ENCODE measurements at regions of chr14 and their contacts with region 1.

Region 1: GRCh38 chr14:96852823-96853422 is 55.7 kb downstream of the VRK1 start:
- DNase-seq: peak; percentile 4
- ATAC-seq: peak; percentile 84
- H3K4me3 ChIP-seq: no peak overlapping the region
- H3K27ac ChIP-seq: no peak overlapping the region
- H3K4me1 ChIP-seq: no peaks in the 10 kb centered on the region
- H3K27me3 ChIP-seq: no peaks in the 10 kb centered on the region
- CTCF ChIP-seq: peak; percentile 57 to 68 (median 61)
- EP300 ChIP-seq: no peak
- POLR2A ChIP-seq: no peak
- RAD21 ChIP-seq: peak; percentile 67

Region 2: GRCh38 chr14:96584199-96584906 is 268.6 kb before region 1 on chr14:
- CTCF ChIA-PET with region 1: interaction called, 11 read pairs
- POLR2A ChIA-PET with region 1: no interaction called
- RAD21 ChIA-PET with region 1: interaction called, 3 read pairs
- SMC1A ChIA-PET with region 1: interaction called, 4 read pairs
- in situ Hi-C with region 1: no loop called
- intact Hi-C with region 1: loop called (anchors 2 kb)
- DNase-seq: no peak
- ATAC-seq: peak; percentile 92
- H3K4me3 ChIP-seq: no peak overlapping the region
- H3K27ac ChIP-seq: no peak overlapping the region
- H3K4me1 ChIP-seq: no peaks in the 10 kb centered on the region
- H3K27me3 ChIP-seq: peaks cover 0 to 2% of the 10 kb centered on the region in 2 experiments; a peak in 1 of 4 replicates
- CTCF ChIP-seq: peak; percentile 65 to 90 (median 74)
- EP300 ChIP-seq: no peak
- POLR2A ChIP-seq: no peak
- RAD21 ChIP-seq: peak; percentile 67

Region 3: GRCh38 chr14:96676166-96676565 is 176.8 kb before region 1 on chr14:
- CTCF ChIA-PET with region 1: no interaction called
- POLR2A ChIA-PET with region 1: no interaction called
- RAD21 ChIA-PET with region 1: no interaction called
- SMC1A ChIA-PET with region 1: no interaction called
- in situ Hi-C with region 1: no loop called
- intact Hi-C with region 1: no loop called
- DNase-seq: no peak
- ATAC-seq: no peak
- H3K4me3 ChIP-seq: no peak overlapping the region
- H3K27ac ChIP-seq: no peak overlapping the region
- H3K4me1 ChIP-seq: no peaks in the 10 kb centered on the region
- H3K27me3 ChIP-seq: no peaks in the 10 kb centered on the region
- CTCF ChIP-seq: no peak
- EP300 ChIP-seq: no peak
- POLR2A ChIP-seq: no peak
- RAD21 ChIP-seq: no peak

Region 4: DNA sequence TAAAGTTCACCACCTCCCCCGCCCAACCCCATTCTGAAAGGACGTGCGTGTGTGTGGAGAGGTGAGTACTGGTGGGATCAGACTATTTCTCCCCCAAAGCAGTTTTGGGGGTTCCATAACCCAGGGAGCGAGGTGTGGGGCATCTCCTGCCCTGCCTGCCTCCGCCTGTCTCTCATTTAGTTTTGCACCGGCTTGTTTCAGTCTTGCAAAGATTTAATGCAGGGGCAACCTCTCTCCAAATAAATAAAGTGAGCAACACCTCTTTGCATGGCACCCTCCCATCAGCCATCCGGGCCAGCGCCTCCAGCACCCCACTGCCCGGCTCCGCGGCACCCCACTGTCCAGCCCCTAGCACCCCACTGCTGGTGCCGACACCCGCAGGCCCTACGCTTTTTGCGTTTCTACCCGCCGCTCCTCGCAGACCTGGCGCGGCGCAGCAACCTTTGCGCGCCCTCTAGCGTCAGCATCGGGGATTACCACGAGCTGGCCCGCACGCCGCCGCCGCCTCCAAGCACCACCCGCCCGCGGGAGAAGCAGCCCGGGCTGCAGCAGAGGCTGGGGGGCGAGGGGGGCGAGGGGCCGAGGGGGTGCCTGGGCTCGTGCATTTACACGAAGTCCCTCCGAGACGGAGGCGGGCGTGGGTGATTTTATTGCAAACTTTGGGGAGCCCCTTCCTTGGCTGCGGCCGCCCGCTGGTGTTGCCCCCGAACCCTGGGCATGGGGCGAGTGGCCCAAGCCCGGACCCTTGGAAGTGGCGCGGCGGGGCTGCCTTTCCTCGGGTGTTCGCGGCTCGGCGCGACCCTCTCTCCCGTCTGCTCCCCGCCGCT is 111.6 kb before region 1 on chr14:
- CTCF ChIA-PET with region 1: interaction called, 15 read pairs
- POLR2A ChIA-PET with region 1: no interaction called
- RAD21 ChIA-PET with region 1: interaction called, 18 read pairs
- SMC1A ChIA-PET with region 1: interaction called, 13 read pairs
- in situ Hi-C with region 1: no loop called
- intact Hi-C with region 1: no loop called
- DNase-seq: no peak
- ATAC-seq: peak; percentile 97
- H3K4me3 ChIP-seq: peak overlapping the region; percentile 23; the same call in 1 of the 2 replicates
- H3K27ac ChIP-seq: no peak overlapping the region
- H3K4me1 ChIP-seq: no peaks in the 10 kb centered on the region
- H3K27me3 ChIP-seq: peaks cover 7 to 11% of the 10 kb centered on the region in 2 experiments
- CTCF ChIP-seq: peak; percentile 65 to 87 (median 85)
- EP300 ChIP-seq: no peak
- POLR2A ChIP-seq: no peak
- RAD21 ChIP-seq: peak; percentile 80

Region 5: GRCh38 chr14:96796851-96797581 is 55.9 kb before region 1 on chr14 and contains the start of gene VRK1:
- CTCF ChIA-PET with region 1: interaction called, 36 read pairs
- POLR2A ChIA-PET with region 1: interaction called, 7 read pairs
- RAD21 ChIA-PET with region 1: interaction called, 21 read pairs
- SMC1A ChIA-PET with region 1: interaction called, 44 read pairs
- in situ Hi-C with region 1: no loop called
- intact Hi-C with region 1: loop called (anchors 5 kb)
- DNase-seq: peak; percentile 83
- ATAC-seq: peak; percentile 96
- H3K4me3 ChIP-seq: peak within 1 kb of the TSS; percentile 97
- H3K27ac ChIP-seq: peak within 1 kb of the TSS; percentile 87
- H3K4me1 ChIP-seq: peaks cover 4% of the 10 kb centered on the region
- H3K27me3 ChIP-seq: no peaks in the 10 kb centered on the region
- CTCF ChIP-seq: no peak
- EP300 ChIP-seq: no peak
- POLR2A ChIP-seq: peak; percentile 84
- RAD21 ChIP-seq: no peak
- polyA plus RNA-seq, gene VRK1: 127 to 137 TPM

Region 6: GRCh38 chr14:96811265-96811664 is 41.7 kb before region 1 on chr14:
- CTCF ChIA-PET with region 1: interaction called, 19 read pairs
- POLR2A ChIA-PET with region 1: interaction called, 3 read pairs
- RAD21 ChIA-PET with region 1: interaction called, 7 read pairs
- SMC1A ChIA-PET with region 1: interaction called, 9 read pairs
- in situ Hi-C with region 1: no loop called
- intact Hi-C with region 1: no loop called
- DNase-seq: no peak
- ATAC-seq: no peak
- H3K4me3 ChIP-seq: no peak overlapping the region
- H3K27ac ChIP-seq: no peak overlapping the region
- H3K4me1 ChIP-seq: no peaks in the 10 kb centered on the region; the same call in 1 of the 2 replicates
- H3K27me3 ChIP-seq: no peaks in the 10 kb centered on the region
- CTCF ChIP-seq: no peak
- EP300 ChIP-seq: no peak
- POLR2A ChIP-seq: no peak
- RAD21 ChIP-seq: no peak

Region 7: GRCh38 chr14:96832351-96832750 is 20.6 kb before region 1 on chr14:
- CTCF ChIA-PET with region 1: interaction called, 13 read pairs
- POLR2A ChIA-PET with region 1: no interaction called
- RAD21 ChIA-PET with region 1: no interaction called
- SMC1A ChIA-PET with region 1: interaction called, 7 read pairs
- in situ Hi-C with region 1: no loop called
- intact Hi-C with region 1: no loop called
- DNase-seq: no peak
- ATAC-seq: no peak
- H3K4me3 ChIP-seq: no peak overlapping the region
- H3K27ac ChIP-seq: no peak overlapping the region
- H3K4me1 ChIP-seq: no peaks in the 10 kb centered on the region
- H3K27me3 ChIP-seq: no peaks in the 10 kb centered on the region
- CTCF ChIP-seq: no peak
- EP300 ChIP-seq: no peak
- POLR2A ChIP-seq: no peak
- RAD21 ChIP-seq: no peak